ENCODE measurements at regions of chr5 and their contacts with region 1.

Region 1: GRCh38 chr5:176647030-176647866 is at the start of gene TSPAN17:
- DNase-seq: peak; percentile 100
- ATAC-seq: peak; percentile 95
- total RNA-seq, gene TSPAN17: 34.8 to 37.2 TPM

Region 2: DNA sequence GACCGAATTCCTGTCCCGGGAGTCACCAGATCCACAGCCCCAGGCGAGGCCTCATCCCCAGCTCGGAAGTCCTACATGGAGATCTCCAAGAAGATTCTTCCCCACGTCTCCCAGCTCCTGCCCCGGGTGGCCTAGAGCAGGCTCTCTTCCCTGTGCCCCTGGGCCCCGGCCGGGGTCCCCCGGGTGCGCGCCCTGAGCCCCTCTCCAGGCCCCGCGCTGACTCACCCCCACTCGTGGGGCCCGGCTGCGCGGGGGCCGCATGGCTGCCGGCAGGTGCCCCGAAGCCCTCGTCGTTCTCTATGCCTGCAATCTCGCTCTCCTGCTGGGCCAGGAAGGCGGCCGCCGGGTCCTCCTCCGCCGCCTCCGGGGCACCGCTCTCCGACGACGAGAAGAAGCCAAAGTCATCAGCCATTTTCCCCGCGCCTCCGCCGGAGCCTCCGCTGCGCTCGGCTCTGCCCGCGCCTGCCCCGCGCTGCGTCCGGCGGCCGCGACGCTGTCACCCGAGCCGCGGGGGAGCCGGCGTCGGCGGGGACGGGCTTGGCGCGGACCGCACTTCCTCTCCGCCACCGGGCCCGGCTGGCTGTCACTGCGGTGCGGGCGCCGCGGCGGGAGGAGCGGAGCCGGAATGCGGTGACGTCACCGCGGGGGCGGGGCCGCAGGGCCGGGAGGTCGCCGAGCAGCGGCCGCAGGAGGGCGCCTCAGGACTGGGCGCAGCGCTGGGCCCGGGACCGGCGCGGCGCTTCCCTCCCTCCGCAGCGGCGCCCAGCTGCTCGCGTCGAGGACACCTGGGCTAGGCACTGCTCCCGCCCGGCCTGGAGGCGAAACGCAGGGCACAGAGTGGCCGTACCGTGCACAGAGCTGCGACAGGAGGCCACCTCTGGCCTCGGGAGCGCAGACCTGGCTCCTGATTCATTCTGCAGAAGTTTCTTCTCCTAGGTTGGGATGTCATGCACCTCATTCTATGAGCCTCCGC is 231.0 kb before region 1 on chr5 and contains the start of gene CLTB:
- intact Hi-C with region 1: loop called in 1 of 2 experiments (anchors 10 kb)
- DNase-seq: peak; percentile 86 to 96
- ATAC-seq: peak; percentile 91
- total RNA-seq, gene CLTB: 279 to 282 TPM

Region 3: DNA sequence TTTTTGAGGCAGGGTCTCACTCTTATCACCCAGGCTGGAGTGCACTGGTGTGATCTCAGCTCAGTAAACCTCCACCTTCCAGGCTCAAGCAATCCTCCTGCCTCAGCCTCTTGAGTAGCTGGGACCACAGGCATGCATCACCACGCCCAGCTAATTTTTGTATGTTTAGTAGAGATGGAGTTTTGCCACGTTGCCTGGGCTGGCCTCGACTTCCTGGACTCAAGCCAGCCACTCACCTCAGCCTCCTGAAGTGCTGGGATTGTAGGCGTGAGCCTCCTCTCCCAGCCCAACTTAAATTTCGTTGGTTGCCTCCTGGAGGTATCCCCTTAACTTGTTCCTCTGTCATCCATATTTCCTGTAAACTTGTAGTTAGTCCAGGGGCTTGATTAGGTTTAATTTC is 609.0 kb after region 1 on chr5:
- intact Hi-C with region 1: no loop called
- DNase-seq: no peak
- ATAC-seq: no peak

Measured in left colon (tissue), 2 donors.